K562 (cell line): ENCODE measurements at regions of chr1 and their contacts with region 1.

Region 1: DNA sequence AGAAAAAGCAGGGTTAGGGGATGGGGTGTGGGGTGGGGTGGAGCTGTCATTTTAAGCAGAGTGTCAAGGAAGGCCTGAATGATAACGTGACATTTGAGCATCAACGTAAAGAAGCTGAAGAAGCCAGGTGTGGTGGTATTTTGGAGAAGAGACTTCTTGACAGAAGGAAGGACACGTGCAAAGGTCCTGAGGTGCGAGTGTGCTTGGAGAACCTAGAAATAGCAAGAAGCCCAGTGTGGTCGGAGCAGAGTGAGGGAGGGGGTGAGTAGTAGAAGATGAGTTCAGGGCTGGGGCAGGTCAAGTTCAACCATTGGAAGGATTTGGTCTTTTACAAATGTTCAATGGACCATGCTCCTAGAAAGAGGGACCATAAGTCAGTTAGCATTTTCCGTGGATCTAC is 140.2 kb upstream of the ZBTB40 start:
- DNase-seq: no peak
- ATAC-seq: no peak
- H3K4me3 ChIP-seq: no peak overlapping the region
- H3K27ac ChIP-seq: no peak overlapping the region
- H3K4me1 ChIP-seq: peaks cover 0 to 5% of the 10 kb centered on the region in 2 experiments; a peak in 1 of 5 replicates
- H3K27me3 ChIP-seq: peaks cover 26 to 40% of the 10 kb centered on the region in 2 experiments
- CTCF ChIP-seq: no peak
- EP300 ChIP-seq: no peak
- POLR2A ChIP-seq: no peak
- RAD21 ChIP-seq: no peak

Region 2: GRCh38 chr1:22296701-22297591 is 14.5 kb before region 1 on chr1:
- CTCF ChIA-PET with region 1: no interaction called
- POLR2A ChIA-PET with region 1: interaction called, 3 read pairs
- in situ Hi-C with region 1: no loop called
- intact Hi-C with region 1: loop called (anchors 2 kb)
- DNase-seq: peak; percentile 50 to 61 (median 52)
- ATAC-seq: peak; percentile 87
- H3K4me3 ChIP-seq: no peak overlapping the region
- H3K27ac ChIP-seq: no peak overlapping the region
- H3K4me1 ChIP-seq: peaks cover 9 to 19% of the 10 kb centered on the region in 2 experiments
- H3K27me3 ChIP-seq: peaks cover 3 to 8% of the 10 kb centered on the region in 2 experiments; a peak in 4 of 5 replicates
- CTCF ChIP-seq: peak in 2 of 3 experiments; percentile 36 to 39; a peak in 2 of 6 replicates
- EP300 ChIP-seq: peak; percentile 71
- POLR2A ChIP-seq: no peak
- RAD21 ChIP-seq: no peak